MCF 10A (cell line): ENCODE measurements at regions of chr2 and their contacts with region 1.

Region 1: DNA sequence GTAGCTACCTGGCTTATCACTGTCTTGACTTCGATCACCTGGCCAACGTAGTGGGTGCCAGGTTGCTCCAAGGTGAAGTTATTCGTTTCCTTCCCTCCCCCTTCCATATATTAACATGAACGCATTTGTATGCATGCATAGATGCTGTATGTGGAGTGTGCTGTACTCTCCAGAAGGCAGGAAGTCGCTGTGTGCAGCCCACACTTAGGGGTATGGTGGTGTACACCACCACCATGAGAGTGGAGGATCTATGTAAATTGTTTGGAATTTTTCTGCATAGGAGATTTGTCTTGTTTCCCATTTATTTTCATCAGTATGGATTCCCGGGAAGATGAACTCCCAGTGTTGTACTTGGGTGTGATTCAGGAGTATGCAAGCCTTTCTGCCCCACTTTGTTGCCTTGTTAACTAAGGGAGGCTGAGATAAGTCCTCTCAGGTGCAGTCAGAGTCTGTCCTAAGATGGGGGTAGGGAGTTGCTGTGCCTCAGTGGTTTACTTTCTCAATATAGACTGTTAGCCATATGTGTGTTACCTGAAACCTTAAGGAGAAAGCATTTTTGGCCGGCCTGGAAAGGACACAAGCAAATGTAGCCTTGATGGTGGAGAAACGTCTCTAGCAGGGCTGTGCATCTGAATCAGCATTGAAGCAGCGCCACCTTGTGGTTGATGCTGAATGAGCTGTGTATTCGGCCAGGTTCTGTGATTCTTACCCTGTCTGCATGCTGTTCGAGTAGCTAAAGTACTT is 149.8 kb downstream of the TANC1 start:
- DNase-seq: peak; percentile 88
- H3K4me3 Mint-ChIP-seq: no peak overlapping the region
- H3K27ac Mint-ChIP-seq: no peak overlapping the region
- H3K4me1 Mint-ChIP-seq: peaks cover 18% of the 10 kb centered on the region
- H3K27me3 Mint-ChIP-seq: no peaks in the 10 kb centered on the region
- CTCF ChIP-seq: peak; percentile 76

Region 2: DNA sequence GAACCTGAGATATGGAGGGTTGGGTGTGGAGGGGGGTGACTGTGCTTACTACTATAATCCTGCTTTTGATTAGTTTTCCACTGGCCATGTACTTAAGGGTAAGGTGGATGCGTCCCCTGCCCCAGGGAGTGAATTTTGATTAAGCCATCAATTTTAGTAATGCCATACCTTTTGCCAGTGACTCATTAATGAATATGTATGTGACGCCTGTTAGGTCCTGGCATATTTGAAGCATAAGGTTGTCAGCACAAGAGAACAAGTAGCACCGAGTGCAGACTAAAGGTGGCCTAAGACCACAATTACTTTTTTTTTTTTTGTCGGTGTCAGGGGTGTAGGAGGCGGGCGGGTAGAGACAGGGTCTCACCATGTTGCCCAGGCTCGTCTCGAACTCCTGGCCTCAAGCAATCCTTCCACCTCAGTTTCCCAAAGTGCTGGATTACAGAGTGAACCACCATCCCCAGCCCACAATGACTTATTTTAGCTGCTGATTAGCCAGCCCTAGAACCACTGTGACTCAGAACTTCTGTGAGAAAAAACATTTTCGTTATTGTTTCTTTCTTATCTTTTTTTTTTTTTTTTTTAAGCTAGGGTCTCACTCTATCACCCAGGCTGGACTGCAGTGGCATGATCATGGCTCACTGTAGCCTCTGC is 142.9 kb before region 1 on chr2:
- CTCF ChIA-PET with region 1: interaction called, 13 read pairs
- POLR2A ChIA-PET with region 1: no interaction called
- intact Hi-C with region 1: no loop called
- DNase-seq: no peak
- H3K4me3 Mint-ChIP-seq: no peak overlapping the region
- H3K27ac Mint-ChIP-seq: no peak overlapping the region
- H3K4me1 Mint-ChIP-seq: peaks cover 50% of the 10 kb centered on the region
- H3K27me3 Mint-ChIP-seq: no peaks in the 10 kb centered on the region
- CTCF ChIP-seq: no peak

Region 3: GRCh38 chr2:159030674-159031380 is 87.5 kb before region 1 on chr2:
- CTCF ChIA-PET with region 1: interaction called, 196 read pairs
- POLR2A ChIA-PET with region 1: interaction called, 13 read pairs
- intact Hi-C with region 1: loop called (anchors 1 kb)
- DNase-seq: peak; percentile 31
- H3K4me3 Mint-ChIP-seq: no peak overlapping the region
- H3K27ac Mint-ChIP-seq: peak overlapping the region; percentile 69
- H3K4me1 Mint-ChIP-seq: peaks cover 32% of the 10 kb centered on the region
- H3K27me3 Mint-ChIP-seq: no peaks in the 10 kb centered on the region
- CTCF ChIP-seq: no peak

Region 4: DNA sequence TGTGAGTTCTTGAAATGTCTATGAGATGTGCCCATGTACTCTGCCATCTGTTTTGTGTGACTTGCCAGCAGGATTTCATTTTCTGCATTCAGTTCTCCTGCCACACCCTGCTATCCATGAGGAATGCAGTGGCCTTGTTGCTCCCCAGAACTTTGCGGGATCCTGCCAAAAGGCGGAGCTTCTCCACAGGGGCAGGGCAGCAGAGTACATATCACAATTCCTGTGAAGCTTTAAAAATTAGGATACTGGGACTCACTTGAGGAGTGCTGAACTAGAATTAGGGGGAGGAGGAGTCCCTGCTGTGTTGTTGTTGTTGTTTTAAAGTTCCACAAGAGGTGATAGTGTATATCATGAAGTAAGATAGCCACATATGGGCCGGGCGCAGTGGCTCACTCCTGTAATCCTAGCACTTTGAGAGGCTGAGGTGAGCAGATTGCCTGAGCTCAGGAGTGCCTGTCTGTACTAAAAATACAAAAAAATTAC is 73.4 kb before region 1 on chr2:
- CTCF ChIA-PET with region 1: interaction called, 196 read pairs
- POLR2A ChIA-PET with region 1: interaction called, 5 read pairs
- intact Hi-C with region 1: no loop called
- DNase-seq: peak; percentile 72
- H3K4me3 Mint-ChIP-seq: peak overlapping the region; percentile 59
- H3K27ac Mint-ChIP-seq: peak overlapping the region; percentile 77
- H3K4me1 Mint-ChIP-seq: peaks cover 63% of the 10 kb centered on the region
- H3K27me3 Mint-ChIP-seq: no peaks in the 10 kb centered on the region
- CTCF ChIP-seq: no peak

Region 5: GRCh38 chr2:159090514-159091201 is 27.6 kb before region 1 on chr2:
- CTCF ChIA-PET with region 1: interaction called, 38 read pairs
- POLR2A ChIA-PET with region 1: interaction called, 6 read pairs
- intact Hi-C with region 1: no loop called
- DNase-seq: peak; percentile 64
- H3K4me3 Mint-ChIP-seq: peak overlapping the region; percentile 41
- H3K27ac Mint-ChIP-seq: peak overlapping the region; percentile 78
- H3K4me1 Mint-ChIP-seq: peaks cover 51% of the 10 kb centered on the region
- H3K27me3 Mint-ChIP-seq: no peaks in the 10 kb centered on the region
- CTCF ChIP-seq: no peak

Region 6: DNA sequence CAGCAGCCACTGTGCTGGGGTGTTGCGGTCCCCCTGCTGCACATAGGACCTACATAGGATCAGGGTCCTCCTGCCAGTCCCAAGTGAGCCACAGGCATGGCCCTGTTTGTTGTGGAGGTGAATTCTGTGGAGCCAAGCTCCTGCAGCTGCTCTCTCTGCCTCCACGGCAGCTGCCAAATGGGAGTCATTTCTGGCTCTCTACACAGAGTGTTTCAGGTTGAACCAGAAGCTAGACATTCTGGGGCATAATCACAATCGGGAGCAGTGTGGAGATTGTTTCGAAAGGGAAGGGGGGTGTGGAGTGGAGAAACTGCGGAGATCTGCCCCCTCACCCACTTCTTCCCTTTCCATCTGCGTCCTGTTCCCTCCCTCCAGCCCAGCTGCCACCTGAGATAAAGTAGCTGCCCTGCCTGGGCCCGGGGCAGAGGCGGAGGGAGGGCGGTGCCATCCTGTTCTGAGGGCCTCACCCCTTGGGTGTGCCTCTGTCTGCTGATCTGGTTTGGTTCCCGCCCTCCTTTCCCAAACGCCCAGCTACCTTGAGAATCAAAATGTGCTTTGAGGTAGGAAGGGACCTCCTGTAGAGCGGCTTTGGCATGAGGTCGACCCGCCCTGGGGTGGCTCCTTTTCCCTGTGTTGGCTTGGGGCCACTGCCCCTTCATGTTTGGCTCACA is 28.8 kb after region 1 on chr2:
- CTCF ChIA-PET with region 1: interaction called, 19 read pairs
- POLR2A ChIA-PET with region 1: no interaction called
- intact Hi-C with region 1: no loop called
- DNase-seq: peak; percentile 66
- H3K4me3 Mint-ChIP-seq: peak overlapping the region; percentile 57
- H3K27ac Mint-ChIP-seq: peak overlapping the region; percentile 61
- H3K4me1 Mint-ChIP-seq: peaks cover 23% of the 10 kb centered on the region
- H3K27me3 Mint-ChIP-seq: no peaks in the 10 kb centered on the region
- CTCF ChIP-seq: no peak

Region 7: DNA sequence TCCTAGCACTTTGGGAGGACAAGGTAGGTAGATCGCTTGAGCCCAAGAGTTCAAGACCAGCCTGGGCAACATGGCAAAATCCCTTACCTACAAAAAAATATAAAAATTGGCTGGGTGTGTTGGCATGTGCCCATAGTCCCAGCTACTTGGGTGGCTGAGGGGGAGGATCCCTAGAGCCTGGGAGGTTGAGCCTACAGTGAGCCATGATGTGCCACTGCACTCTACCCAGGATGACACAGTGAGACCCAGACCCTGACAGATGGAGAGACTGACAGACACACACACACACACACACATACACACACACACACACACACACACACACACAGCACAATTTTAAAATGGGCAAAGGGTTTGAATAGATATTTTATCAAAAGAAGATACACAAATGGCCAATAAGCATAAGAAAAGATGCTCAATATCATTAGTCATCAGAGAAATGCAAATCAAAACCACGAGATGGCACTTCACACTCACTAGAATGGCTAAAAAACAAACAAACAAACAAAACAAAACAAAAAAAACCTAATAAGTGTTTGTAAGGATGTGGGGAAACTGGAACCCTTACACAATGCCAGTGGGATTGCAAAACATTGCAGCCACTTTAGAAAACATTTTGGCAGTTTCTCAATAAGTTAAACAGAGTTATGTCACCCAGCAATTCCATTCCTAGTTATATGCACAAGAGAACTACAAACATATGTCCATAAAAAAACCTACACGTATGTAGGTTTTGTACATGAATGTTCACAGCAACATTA is 455.7 kb after region 1 on chr2:
- CTCF ChIA-PET with region 1: no interaction called
- POLR2A ChIA-PET with region 1: no interaction called
- intact Hi-C with region 1: no loop called
- DNase-seq: peak; percentile 79
- H3K4me3 Mint-ChIP-seq: no peak overlapping the region
- H3K27ac Mint-ChIP-seq: no peak overlapping the region
- H3K4me1 Mint-ChIP-seq: peaks cover 6% of the 10 kb centered on the region
- H3K27me3 Mint-ChIP-seq: no peaks in the 10 kb centered on the region
- CTCF ChIP-seq: no peak